ENCODE measurements at regions of chr6 and their contacts with region 1.

Region 1: GRCh38 chr6:154675602-154676088 is 57.6 kb upstream of the SCAF8 start:
- DNase-seq: peak; percentile 94
- H3K4me3 ChIP-seq: no peak overlapping the region
- H3K27ac ChIP-seq: no peak overlapping the region
- H3K27me3 ChIP-seq: no peaks in the 10 kb centered on the region
- CTCF ChIP-seq: peak; percentile 99

Region 2: GRCh38 chr6:154604119-154604518 is 71.5 kb before region 1 on chr6:
- CTCF ChIA-PET with region 1: no interaction called
- POLR2A ChIA-PET with region 1: no interaction called
- DNase-seq: no peak
- H3K4me3 ChIP-seq: no peak overlapping the region
- H3K27ac ChIP-seq: no peak overlapping the region
- H3K27me3 ChIP-seq: no peaks in the 10 kb centered on the region
- CTCF ChIP-seq: no peak

Region 3: GRCh38 chr6:154661768-154662167 is 13.9 kb before region 1 on chr6:
- CTCF ChIA-PET with region 1: interaction called, 19 read pairs
- POLR2A ChIA-PET with region 1: no interaction called
- DNase-seq: no peak
- H3K4me3 ChIP-seq: no peak overlapping the region
- H3K27ac ChIP-seq: no peak overlapping the region
- H3K27me3 ChIP-seq: no peaks in the 10 kb centered on the region
- CTCF ChIP-seq: no peak

Region 4: DNA sequence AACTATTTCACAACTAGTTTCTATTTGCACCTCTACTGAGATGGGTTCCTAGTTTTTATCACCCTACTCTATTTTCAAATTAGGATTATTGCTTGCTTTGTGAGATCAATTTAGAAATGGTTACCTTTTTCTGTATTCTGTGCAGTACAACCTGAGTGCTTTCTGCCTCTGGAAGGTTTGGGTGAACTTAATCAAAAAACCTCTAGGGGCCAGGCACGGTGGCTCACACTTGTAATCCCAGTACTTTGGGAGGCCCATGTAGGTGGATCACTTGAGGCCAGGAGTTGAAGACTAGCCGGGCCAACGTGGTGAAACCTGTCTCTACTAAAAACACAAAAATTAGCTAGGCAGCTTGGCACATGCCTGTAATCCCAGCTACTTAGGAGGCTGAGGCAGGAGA is 120.8 kb after region 1 on chr6:
- CTCF ChIA-PET with region 1: interaction called, 304 read pairs
- POLR2A ChIA-PET with region 1: no interaction called
- DNase-seq: no peak
- H3K4me3 ChIP-seq: no peak overlapping the region
- H3K27ac ChIP-seq: no peak overlapping the region
- H3K27me3 ChIP-seq: no peaks in the 10 kb centered on the region
- CTCF ChIP-seq: no peak

Region 5: GRCh38 chr6:154814063-154814462 is 138.4 kb after region 1 on chr6:
- CTCF ChIA-PET with region 1: interaction called, 304 read pairs
- POLR2A ChIA-PET with region 1: no interaction called
- DNase-seq: no peak
- H3K4me3 ChIP-seq: no peak overlapping the region
- H3K27ac ChIP-seq: no peak overlapping the region
- H3K27me3 ChIP-seq: no peaks in the 10 kb centered on the region
- CTCF ChIP-seq: no peak

Region 6: GRCh38 chr6:154861825-154862224 is 186.2 kb after region 1 on chr6:
- CTCF ChIA-PET with region 1: interaction called, 11 read pairs
- POLR2A ChIA-PET with region 1: no interaction called
- DNase-seq: no peak
- H3K4me3 ChIP-seq: no peak overlapping the region
- H3K27ac ChIP-seq: no peak overlapping the region
- H3K27me3 ChIP-seq: no peaks in the 10 kb centered on the region
- CTCF ChIP-seq: no peak

Region 7: GRCh38 chr6:155174576-155175211 is 499.0 kb after region 1 on chr6:
- CTCF ChIA-PET with region 1: interaction called, 18 read pairs
- POLR2A ChIA-PET with region 1: no interaction called
- DNase-seq: peak; percentile 55
- H3K4me3 ChIP-seq: no peak overlapping the region
- H3K27ac ChIP-seq: no peak overlapping the region
- H3K27me3 ChIP-seq: no peaks in the 10 kb centered on the region
- CTCF ChIP-seq: peak; percentile 81

Measured in AG04450 (cell line).